ENCODE measurements at regions of chr18 and their contacts with region 1.

Region 1: GRCh38 chr18:67035026-67035425 is 431.1 kb upstream of the CDH19 start:
- DNase-seq: peak; percentile 10
- ATAC-seq: no peak
- H3K4me3 ChIP-seq: no peak overlapping the region
- H3K27ac ChIP-seq: no peak overlapping the region
- H3K4me1 ChIP-seq: no peaks in the 10 kb centered on the region
- H3K27me3 ChIP-seq: no peaks in the 10 kb centered on the region
- CTCF ChIP-seq: no peak

Region 2: GRCh38 chr18:66676699-66677098 is 358.3 kb before region 1 on chr18:
- CTCF ChIA-PET with region 1: no interaction called
- POLR2A ChIA-PET with region 1: no interaction called
- intact Hi-C with region 1: no loop called
- DNase-seq: no peak
- ATAC-seq: no peak
- H3K4me3 ChIP-seq: no peak overlapping the region
- H3K27ac ChIP-seq: no peak overlapping the region
- H3K4me1 ChIP-seq: no peaks in the 10 kb centered on the region
- H3K27me3 ChIP-seq: no peaks in the 10 kb centered on the region
- CTCF ChIP-seq: no peak

Region 3: DNA sequence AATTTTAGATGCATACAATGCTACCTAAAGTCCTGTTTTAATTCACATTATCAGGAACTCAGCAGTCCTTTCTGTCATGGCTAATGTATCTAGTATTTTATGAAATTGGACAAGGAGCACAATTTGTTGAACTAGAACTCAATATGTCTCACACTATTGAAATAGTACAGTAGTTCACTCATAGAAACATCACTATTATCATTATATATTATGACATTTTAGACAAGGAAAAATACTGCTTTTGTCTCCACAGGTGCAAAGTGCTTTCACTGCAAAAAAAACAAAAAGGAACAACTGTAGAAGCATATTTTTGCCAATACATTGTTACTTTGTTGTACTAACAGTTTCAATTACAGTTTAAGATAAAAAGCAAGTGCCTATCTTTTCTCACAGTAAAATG is 12.0 kb before region 1 on chr18:
- CTCF ChIA-PET with region 1: no interaction called
- POLR2A ChIA-PET with region 1: no interaction called
- intact Hi-C with region 1: no loop called
- DNase-seq: no peak
- ATAC-seq: no peak
- H3K4me3 ChIP-seq: no peak overlapping the region
- H3K27ac ChIP-seq: no peak overlapping the region
- H3K4me1 ChIP-seq: no peaks in the 10 kb centered on the region
- H3K27me3 ChIP-seq: no peaks in the 10 kb centered on the region
- CTCF ChIP-seq: no peak

Region 4: DNA sequence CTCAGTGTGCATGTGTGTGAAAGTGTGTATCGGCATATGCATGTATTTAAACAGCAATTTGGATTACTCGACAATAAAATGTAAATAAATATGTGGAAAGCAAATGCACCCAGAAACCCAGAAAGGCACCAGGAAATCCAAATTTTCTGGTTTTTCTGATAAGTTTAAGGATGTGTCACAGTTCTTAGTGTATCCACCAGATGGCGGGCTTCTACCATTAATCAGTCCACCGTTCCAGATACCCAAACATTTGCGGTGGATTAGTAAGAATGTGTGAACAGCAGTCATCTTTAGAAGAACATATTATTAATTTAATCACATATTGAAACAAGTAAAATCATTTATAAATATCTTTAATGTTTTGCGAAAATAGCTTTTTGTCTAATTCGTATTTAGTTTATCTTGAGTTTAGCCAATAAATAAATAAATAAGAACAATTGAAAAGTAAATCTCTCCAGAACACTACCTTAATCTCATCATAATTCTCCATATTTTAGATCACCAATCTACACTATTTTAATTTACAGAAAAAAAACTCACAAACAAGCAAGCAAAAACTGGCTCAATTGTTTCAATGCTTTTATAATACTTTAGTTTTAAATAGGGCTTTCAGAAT is 182.6 kb after region 1 on chr18:
- CTCF ChIA-PET with region 1: no interaction called
- POLR2A ChIA-PET with region 1: no interaction called
- intact Hi-C with region 1: no loop called
- DNase-seq: peak; percentile 73
- ATAC-seq: peak; percentile 83
- H3K4me3 ChIP-seq: no peak overlapping the region
- H3K27ac ChIP-seq: no peak overlapping the region
- H3K4me1 ChIP-seq: no peaks in the 10 kb centered on the region
- H3K27me3 ChIP-seq: no peaks in the 10 kb centered on the region
- CTCF ChIP-seq: peak; percentile 83

Region 5: DNA sequence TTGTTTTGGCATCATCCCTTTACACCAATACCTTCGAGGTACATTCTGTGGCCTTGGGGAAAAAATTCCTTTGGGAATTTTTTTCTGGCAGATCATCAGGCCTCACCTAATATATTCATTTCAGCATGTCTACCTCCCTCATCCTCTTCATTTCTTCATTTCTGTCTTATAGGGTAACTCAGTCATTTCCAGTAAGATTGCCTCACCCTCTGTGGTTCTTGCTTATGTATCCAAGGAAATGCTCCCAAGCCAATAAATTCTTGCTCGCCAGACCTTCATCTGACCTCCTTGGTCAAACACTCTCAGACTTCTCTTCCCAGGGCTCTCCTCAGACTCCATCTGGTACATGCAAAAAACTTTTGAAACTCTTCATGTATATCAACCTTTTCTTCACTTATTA is 1414.3 kb after region 1 on chr18:
- CTCF ChIA-PET with region 1: no interaction called
- POLR2A ChIA-PET with region 1: interaction called, 13 read pairs
- intact Hi-C with region 1: no loop called
- DNase-seq: peak; percentile 74
- ATAC-seq: peak; percentile 45
- H3K4me3 ChIP-seq: no peak overlapping the region
- H3K27ac ChIP-seq: peak overlapping the region; percentile 52
- H3K4me1 ChIP-seq: peaks cover 33% of the 10 kb centered on the region
- H3K27me3 ChIP-seq: no peaks in the 10 kb centered on the region
- CTCF ChIP-seq: no peak